Cardiac septum (tissue), 1 donor: ENCODE measurements at regions of chr10 and their contacts with region 1.

Region 1: GRCh38 chr10:92290837-92291615 is at the starts of genes CPEB3 and MARCHF5:
- DNase-seq: peak; percentile 99
- total RNA-seq, gene CPEB3: 8.3 TPM
- total RNA-seq, gene MARCHF5: 32.1 TPM

Region 2: GRCh38 chr10:92087750-92088395 is 203.2 kb before region 1 on chr10:
- intact Hi-C with region 1: loop called (anchors 2 kb)
- DNase-seq: no peak

Region 3: DNA sequence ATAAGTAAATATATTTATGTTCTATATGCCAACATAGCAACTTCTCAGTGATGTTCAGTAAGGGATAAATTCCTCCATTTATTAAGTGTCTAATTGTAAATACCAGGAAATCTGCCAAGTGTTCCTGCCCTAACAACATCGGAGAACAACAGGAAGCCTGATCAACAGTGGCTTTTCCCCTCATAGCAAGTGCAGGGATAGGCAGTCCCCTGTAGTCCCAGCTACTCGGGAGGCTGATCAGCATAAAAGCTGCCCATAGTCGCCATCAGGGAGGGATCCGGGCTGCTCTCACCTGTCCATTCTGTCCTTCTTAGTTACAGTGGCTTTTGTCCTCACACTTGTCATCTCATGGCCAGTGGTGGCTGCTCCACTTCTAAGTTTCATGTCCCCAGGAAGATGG is 141.6 kb after region 1 on chr10:
- intact Hi-C with region 1: loop called (anchors 5 kb)
- DNase-seq: no peak

Region 4: GRCh38 chr10:92470041-92470440 is 179.0 kb after region 1 on chr10:
- intact Hi-C with region 1: no loop called
- DNase-seq: no peak